ENCODE measurements at regions of chr7 and their contacts with region 1.

Region 1: DNA sequence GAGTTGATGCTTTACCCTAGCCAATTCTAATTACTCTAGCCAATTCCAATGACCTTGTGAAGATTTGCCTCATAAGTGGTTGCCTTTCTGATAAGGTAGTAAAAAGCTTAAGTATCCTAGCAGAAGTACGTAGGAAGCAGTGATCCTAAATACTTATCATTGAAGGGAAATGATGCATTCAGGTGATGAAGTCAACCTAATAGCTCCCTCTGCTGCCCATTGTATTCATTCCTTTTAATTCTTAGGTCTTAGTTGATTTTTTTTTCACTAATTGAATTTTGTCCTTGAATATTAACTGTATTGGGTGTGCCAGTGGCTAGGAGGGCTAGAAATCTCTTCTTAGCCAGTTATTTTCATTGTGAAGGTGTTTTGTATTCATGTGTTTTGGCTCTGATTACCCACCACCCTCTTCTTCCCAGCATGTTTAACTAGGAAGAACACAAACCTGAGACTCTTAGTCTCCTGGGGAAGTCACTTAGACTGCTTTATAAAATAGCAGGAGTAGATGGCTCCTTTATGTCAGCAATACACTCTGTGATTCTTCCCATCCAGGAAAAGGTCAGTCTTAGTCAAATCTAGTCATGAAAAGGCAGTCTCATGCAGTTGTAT is 46.3 kb downstream of the PLEKHA8 start:
- H3K4me3 ChIP-seq: no peak overlapping the region
- H3K27ac ChIP-seq: no peak overlapping the region
- H3K4me1 ChIP-seq: peaks cover 3% of the 10 kb centered on the region; the same call in 1 of the 2 replicates
- CTCF ChIP-seq: no peak

Region 2: GRCh38 chr7:29839302-29839701 is 235.2 kb before region 1 on chr7:
- CTCF ChIA-PET with region 1: no interaction called
- POLR2A ChIA-PET with region 1: no interaction called
- H3K4me3 ChIP-seq: no peak overlapping the region
- H3K27ac ChIP-seq: no peak overlapping the region
- H3K4me1 ChIP-seq: no peaks in the 10 kb centered on the region
- CTCF ChIP-seq: no peak

Region 3: GRCh38 chr7:30062591-30062990 is 11.9 kb before region 1 on chr7:
- CTCF ChIA-PET with region 1: interaction called, 34 read pairs
- POLR2A ChIA-PET with region 1: no interaction called
- H3K4me3 ChIP-seq: no peak overlapping the region
- H3K27ac ChIP-seq: no peak overlapping the region
- H3K4me1 ChIP-seq: no peaks in the 10 kb centered on the region
- CTCF ChIP-seq: no peak

Region 4: GRCh38 chr7:30504347-30505173 is 430.0 kb after region 1 on chr7 and contains the start of gene GGCT:
- CTCF ChIA-PET with region 1: no interaction called
- POLR2A ChIA-PET with region 1: no interaction called
- H3K4me3 ChIP-seq: peak within 1 kb of the TSS; percentile 84
- H3K27ac ChIP-seq: peak within 1 kb of the TSS; percentile 68
- H3K4me1 ChIP-seq: 0 out of 2 replicates have a peak, but pooled peaks cover 5% of the 10 kb centered on the region
- CTCF ChIP-seq: no peak

Measured in HEK293 (cell line).